ENCODE measurements at regions of chr11 and their contacts with region 1.

Region 1: DNA sequence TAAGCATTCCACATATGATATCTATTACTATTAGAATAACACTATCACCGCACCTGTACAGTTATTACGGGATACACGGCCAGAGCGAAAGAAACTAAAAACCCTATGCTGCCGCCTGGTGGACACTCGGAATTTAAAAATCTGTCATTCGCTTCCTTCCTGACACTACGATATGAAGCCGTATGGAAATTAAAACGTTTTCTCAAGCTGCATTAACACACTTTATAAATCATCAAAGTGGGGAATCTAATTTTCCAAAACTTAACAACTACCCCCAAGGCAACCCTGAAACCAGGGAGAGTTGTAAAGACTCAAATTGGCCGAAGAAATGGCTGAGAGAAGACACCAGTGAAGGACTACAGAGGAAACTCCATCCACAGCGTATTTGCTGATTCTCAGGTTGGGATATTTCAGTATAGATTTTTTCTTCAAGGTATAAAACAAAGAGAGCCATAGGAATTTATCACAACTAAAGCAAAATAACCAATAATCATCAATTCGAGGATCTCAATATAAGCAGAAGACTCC is 1.4 kb downstream of the CCDC73 start:
- DNase-seq: peak in 1 of 2 donors; percentile 13
- ATAC-seq: peak; percentile 58 to 72
- H3K4me3 ChIP-seq: peak overlapping the region in 3 of 4 donors; percentile 13 to 28 (median 28)
- H3K27ac ChIP-seq: no peak overlapping the region
- H3K4me1 ChIP-seq: peaks cover 0 to 3% of the 10 kb centered on the region in 2 donors
- H3K27me3 ChIP-seq: no peaks in the 10 kb centered on the region
- CTCF ChIP-seq: peak; percentile 39 to 58 (median 48)
- POLR2A ChIP-seq: no peak

Region 2: DNA sequence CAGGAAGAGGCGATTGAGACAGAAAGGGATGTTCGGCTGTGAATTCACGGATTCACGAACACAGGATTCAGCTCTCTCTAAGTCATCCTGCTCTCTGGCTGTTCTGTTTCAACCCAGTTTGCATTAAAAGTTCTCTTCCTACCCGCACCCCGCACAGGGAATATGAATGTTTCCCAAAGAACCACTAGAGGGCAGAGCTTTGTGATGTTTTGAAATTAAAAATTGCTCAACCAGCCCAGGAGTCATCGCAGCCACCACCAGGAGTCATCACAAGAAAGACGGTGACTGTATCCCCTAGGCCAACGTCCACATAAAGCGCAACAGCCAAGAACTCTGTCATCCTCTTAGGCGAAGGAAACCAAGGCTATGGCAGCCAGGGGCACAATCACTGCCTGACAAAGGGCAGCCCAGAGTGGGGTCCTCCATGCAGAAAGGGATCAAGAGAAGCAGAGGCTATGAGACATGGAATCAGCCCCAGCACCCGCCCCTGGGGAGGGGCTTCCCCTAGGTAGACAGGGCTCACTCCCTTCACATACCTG is 480.1 kb before region 1 on chr11:
- in situ Hi-C with region 1: loop called in 1 of 4 experiments (anchors 25 kb)
- intact Hi-C with region 1: no loop called
- DNase-seq: no peak
- ATAC-seq: no peak
- H3K4me3 ChIP-seq: no peak overlapping the region
- H3K27ac ChIP-seq: no peak overlapping the region
- H3K4me1 ChIP-seq: no peaks in the 10 kb centered on the region
- H3K27me3 ChIP-seq: no peaks in the 10 kb centered on the region
- CTCF ChIP-seq: peak in 1 of 5 experiments; percentile 28
- POLR2A ChIP-seq: no peak

Region 3: DNA sequence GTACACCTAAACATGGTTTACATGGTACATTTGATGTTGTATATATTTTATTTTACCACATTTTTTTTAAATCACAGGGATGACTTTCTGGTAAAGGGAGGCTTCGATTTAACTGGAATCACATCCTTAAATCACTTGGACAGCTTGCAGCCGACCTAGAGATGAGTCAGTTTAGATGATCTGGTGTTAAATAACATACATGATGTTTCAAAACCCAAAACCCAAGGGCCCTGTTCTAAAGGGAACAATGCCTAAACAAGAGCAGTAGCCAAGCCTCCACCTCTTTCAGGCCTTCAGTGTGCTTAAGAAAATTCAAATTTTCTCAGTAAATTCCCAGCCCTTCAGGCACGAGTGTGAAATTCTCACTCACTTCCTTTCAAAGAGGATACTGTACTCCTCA is 466.5 kb before region 1 on chr11:
- in situ Hi-C with region 1: loop called in 2 of 4 experiments (anchors 10 to 25 kb)
- intact Hi-C with region 1: loop called (anchors 5 kb)
- DNase-seq: no peak
- ATAC-seq: no peak
- H3K4me3 ChIP-seq: no peak overlapping the region
- H3K27ac ChIP-seq: no peak overlapping the region
- H3K4me1 ChIP-seq: no peaks in the 10 kb centered on the region
- H3K27me3 ChIP-seq: no peaks in the 10 kb centered on the region
- CTCF ChIP-seq: no peak
- POLR2A ChIP-seq: no peak

Region 4: DNA sequence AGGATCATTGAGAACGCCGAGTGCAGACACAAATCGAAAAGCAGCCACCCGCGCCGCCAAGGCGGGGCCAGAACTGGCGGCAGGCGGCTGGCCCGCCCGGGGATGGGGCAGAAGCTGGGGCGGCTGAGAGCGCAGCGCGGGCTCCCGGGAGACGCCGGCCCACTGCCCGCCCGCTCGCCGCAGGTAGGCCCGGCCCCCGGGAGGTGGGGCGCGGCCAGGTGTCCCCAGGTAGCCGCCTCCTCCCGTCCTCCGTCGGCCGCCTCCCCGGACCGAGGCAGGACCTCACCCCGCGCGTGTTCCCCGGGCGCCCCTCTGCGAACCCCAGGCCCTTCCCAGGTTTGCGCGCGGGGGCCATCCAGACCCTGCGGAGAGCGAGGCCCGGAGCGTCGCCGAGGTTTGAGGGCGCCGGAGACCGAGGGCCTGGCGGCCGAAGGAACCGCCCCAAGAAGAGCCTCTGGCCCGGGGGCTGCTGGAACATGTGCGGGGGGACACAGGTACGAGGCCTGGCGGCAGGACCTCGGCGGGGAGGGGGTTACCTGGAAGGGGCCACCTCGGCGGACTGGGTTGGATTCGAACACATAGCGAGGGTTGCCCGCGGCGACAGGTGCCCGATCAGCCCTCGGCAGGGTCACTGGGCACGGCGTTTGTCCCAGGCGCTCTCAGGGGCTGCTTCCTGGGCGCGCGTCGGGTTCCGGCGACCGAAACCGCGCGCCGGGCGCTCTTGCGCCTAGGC is 36.8 kb after region 1 on chr11 and contains the start of gene PRRG4:
- in situ Hi-C with region 1: no loop called
- intact Hi-C with region 1: no loop called
- DNase-seq: peak; percentile 3 to 19
- ATAC-seq: peak in 1 of 2 donors; percentile 33
- H3K4me3 ChIP-seq: peak within 1 kb of the TSS; percentile 51 to 72 (median 55)
- H3K27ac ChIP-seq: peak within 1 kb of the TSS in 2 of 4 donors; percentile 18 to 32
- H3K4me1 ChIP-seq: peaks cover 4% of the 10 kb centered on the region in 2 donors
- H3K27me3 ChIP-seq: peaks cover 7 to 20% (median 14%) of the 10 kb centered on the region in 3 donors
- CTCF ChIP-seq: no peak
- POLR2A ChIP-seq: no peak
- total RNA-seq, gene PRRG4: 0.46 to 1.8 (median 0.75) TPM

Region 5: DNA sequence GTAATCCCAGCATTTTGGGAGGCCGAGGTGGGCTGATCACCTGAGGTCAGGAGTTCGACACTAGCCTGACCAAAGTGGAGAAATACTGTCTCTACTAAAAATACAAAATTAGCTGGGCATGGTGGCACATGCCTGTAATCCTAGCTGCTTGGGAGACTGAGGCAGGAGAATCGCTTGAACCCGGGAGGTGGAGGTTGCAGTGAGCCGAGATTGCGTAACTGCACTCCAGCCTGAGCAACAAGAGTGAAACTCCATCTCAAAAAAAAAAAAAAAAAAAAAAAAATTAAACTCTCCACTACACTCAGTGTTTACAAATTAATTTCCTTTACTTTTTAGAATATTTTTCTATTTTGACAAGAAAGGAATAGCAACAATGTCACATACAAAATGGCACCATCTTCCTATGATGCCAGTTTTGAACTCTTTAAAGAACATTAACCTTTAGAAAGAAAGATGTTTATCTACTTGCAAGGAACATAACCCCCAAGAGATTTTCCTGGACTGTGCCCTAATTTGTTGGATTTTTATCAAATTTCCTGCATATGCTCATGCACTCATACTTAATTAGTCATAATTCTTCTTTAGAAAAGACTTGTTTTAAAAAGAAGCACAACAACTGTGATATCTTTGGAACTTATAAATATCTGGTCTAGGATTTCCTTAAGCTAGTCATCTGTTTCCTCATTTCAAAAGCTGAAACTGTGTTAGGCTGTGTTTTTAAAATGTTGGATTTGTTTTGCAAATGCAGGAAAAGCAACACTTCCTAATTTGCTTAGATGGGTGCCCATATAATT is 441.6 kb after region 1 on chr11:
- in situ Hi-C with region 1: no loop called
- intact Hi-C with region 1: no loop called
- DNase-seq: no peak
- ATAC-seq: peak; percentile 47 to 61
- H3K4me3 ChIP-seq: peak overlapping the region in 1 of 4 donors; percentile 11
- H3K27ac ChIP-seq: peak overlapping the region in 3 of 4 donors; percentile 18 to 66 (median 65)
- H3K4me1 ChIP-seq: peaks cover 0 to 8% of the 10 kb centered on the region in 2 donors
- H3K27me3 ChIP-seq: no peaks in the 10 kb centered on the region
- CTCF ChIP-seq: no peak
- POLR2A ChIP-seq: no peak